ENCODE measurements at regions of chr1 and their contacts with region 1.

Region 1: GRCh38 chr1:182789138-182790076 is at the start of gene NPL:
- DNase-seq: peak; percentile 69 to 98 (median 84)

Region 2: DNA sequence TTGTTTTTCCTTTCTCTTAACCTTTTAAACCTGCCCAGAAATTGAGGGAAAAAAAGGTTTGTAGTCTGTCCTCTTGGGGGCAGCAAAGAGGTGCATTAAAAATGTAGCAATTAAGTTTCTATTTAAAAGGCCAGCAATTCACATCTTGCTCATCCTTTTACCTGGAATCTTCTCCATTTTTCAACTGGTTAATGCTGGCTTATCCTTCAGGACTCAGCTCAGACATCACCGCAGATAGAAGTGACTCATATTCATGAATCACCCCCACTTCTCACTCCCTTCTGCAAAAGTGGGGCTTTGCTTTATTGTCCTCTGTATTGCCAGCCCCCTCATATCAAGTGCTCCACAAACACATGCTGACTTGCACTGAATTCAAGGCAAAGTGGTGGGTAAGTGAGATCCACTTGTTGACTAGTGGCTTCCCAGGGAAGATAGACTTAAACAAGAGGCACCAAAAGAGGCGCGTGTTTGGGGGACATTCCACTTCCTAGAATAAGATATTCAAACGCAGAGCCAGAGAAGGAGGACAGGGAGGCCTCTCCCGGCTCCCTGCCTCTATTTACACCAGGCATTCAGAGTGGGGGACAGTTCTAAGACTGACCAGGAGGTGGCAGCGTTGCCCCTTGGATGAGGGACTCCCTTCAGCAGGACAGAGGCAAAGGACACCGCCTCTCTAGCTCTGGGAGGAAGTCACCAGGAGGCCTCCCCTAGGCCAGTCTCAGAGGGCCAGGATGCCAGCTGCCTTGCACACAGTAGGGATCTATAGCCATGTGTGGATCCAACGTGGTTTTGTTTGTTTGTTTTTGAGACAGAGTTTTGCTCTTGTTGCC is 704.7 kb before region 1 on chr1:
- intact Hi-C with region 1: loop called (anchors 5 kb)
- DNase-seq: peak; percentile 77 to 98 (median 92)

Region 3: GRCh38 chr1:182397771-182398393 is 391.5 kb before region 1 on chr1:
- intact Hi-C with region 1: loop called (anchors 5 kb)
- DNase-seq: no peak

Region 4: DNA sequence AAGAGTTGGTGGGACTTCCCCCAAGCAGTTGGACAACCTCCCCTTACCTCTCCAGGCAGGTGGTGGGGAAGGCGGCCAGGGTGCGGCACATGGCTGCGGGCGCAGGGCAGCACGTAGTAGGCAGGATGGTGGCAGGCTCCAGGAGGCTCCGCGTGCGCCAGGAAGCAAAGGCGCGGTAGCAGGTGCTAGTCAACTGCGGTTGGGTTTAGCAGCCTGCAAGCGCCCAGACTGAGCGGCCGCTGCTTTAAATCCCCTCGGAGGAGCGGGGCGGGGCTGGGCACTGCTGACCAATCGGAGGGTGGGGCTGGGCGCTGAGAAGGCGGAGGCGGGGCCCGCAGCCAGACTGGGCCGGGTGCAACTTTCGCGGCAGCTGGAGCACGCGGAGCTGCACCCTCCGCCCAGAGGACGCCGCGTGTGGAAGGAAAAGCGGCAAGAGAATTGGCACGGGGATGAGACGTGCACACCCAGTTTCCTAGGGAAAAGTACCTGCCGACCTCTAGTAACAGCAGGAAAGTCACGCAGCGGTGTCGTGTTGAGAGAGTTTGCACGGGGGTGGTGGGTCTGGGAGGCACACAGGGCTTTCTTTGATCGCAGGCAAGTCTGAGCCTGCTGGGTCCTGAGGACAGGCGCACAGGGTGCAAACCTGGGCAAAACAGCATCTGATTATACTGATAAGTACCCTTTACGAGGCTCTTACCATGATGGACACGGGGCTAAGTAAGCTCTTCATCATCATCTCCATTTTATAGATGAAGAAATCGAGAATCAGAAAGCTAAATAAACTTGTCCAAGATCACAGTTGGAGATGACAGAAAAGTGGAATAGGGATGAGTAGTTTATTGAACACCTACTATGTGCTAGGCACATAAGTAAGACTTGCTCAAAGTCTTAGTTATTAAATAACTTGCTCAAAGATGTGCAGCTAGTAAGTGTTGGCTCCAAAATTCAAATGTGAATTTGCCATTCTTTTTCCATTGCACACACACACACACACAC is 184.9 kb before region 1 on chr1 and contains the start of gene RGS16:
- intact Hi-C with region 1: loop called (anchors 1 kb)
- DNase-seq: peak; percentile 84 to 99 (median 92)

Region 5: DNA sequence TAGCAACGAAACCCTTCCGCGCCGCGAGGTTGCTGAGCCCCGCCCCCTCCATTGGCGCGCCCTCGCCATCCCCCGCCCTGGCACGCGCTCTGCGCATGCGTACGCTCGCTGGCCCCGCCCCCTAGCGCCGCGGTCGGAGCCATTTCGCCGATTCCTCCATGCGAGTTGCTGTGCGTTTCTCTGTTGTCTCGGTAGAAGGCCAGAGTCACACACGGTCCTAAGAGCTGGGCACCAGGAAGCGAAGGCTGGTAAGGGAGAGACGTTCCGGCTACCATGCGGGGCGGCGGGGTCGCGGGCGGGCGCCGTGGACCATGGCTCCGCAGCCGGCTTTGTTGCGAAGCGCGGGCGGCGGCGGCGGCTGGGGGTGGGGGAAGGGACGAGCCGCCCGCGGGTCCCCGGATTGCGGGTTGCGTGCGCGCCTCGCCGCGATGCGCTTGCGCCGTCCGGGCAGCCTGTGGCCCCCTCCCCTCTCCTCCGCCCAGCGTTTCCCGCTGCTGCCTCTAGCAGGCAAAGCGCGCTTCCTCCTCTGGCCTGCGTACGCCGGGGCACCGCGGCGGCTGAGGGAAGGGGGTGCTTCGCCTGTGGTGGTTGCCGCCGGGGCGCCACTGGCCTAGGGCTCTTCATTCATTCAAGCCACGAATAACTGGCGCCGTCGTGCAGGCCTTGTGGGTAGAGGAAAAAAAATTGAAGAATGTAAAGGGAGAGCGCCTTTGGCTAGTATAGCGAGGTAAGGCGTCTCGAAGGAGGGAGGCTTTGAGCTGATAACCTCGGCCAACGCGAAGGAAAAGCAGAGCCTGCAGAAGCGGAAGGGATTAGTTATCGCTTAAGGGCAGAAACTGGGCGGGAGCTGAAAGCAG is 50.0 kb after region 1 on chr1 and contains the start of gene DHX9:
- intact Hi-C with region 1: loop called (anchors 2 kb)
- DNase-seq: peak; percentile 87 to 98 (median 92)